Dorsolateral prefrontal cortex (tissue), 120 donors: ENCODE measurements at regions of chr2 and their contacts with region 1.

Region 1: GRCh38 chr2:61888267-61889055 is at the start of gene CCT4:
- DNase-seq: peak; percentile 79 to 91 (median 86)
- H3K4me3 ChIP-seq: peak within 1 kb of the TSS; percentile 65 to 98 (median 89)
- H3K27ac ChIP-seq: peak within 1 kb of the TSS; percentile 92 to 100 (median 99)
- H3K27me3 ChIP-seq: no peaks in the 10 kb centered on the region
- CTCF ChIP-seq: peak in 22 of 56 donors; percentile 5 to 46 (median 18)
- total RNA-seq, gene CCT4: 56.8 to 160 (median 105) TPM

Region 2: GRCh38 chr2:61144697-61145268 is 743.7 kb before region 1 on chr2:
- intact Hi-C with region 1: loop called (anchors 10 kb)
- DNase-seq: peak; percentile 79 to 93 (median 88)
- H3K4me3 ChIP-seq: peak overlapping the region; percentile 51 to 96 (median 69)
- H3K27ac ChIP-seq: peak overlapping the region in 58 of 59 donors; percentile 31 to 96 (median 87)
- H3K27me3 ChIP-seq: no peaks in the 10 kb centered on the region
- CTCF ChIP-seq: peak in 29 of 56 donors; percentile 3 to 50 (median 26)

Region 3: DNA sequence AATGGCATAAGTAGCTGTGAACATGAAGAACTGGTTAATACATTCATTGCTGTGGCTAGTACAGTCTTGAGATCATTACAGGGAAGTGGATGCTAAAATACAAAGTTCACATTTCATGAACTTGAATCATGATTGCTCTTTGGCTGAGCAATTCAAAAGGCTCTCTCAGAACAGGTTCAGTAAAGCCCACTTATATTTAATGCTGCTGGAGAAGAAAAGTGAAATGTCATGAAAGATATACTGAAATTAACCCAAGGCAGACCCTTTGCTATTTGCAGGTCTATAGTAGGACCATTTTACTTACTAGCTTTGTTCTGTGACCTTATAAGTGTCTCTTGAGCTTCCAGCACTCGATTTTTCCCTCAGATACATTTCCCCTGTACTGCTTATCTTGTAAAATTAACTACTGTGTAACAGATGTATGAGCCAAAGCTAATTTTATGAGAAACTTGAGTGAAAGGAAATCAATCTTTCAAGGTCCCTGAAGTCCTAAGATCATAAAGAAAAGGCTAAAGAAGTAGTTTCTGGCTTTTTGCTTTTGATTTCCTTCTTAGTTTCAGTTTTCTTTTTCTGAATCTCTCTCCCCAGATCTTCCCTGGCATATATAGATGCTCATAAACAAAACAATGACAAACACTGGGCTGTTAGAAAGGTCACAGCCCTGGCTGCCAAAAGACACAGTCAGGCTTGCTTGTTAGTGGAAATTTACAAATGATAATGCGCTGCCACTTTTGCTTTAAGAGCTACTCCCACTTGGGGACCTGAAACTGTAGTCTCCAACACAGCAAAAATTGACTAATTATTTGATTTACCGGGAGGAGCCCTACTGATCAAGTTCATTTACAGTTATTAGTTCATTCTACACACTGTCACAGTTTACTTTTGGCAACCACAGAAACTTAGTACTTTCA is 217.6 kb before region 1 on chr2:
- intact Hi-C with region 1: loop called in 1 of 2 experiments (anchors 10 kb)
- DNase-seq: peak in 8 of 10 donors; percentile 16 to 78 (median 52)
- H3K4me3 ChIP-seq: peak overlapping the region in 58 of 59 donors; percentile 5 to 65 (median 41)
- H3K27ac ChIP-seq: peak overlapping the region; percentile 76 to 100 (median 98)
- H3K27me3 ChIP-seq: no peaks in the 10 kb centered on the region
- CTCF ChIP-seq: peak in 5 of 56 donors; percentile 16 to 29 (median 20)

Region 4: DNA sequence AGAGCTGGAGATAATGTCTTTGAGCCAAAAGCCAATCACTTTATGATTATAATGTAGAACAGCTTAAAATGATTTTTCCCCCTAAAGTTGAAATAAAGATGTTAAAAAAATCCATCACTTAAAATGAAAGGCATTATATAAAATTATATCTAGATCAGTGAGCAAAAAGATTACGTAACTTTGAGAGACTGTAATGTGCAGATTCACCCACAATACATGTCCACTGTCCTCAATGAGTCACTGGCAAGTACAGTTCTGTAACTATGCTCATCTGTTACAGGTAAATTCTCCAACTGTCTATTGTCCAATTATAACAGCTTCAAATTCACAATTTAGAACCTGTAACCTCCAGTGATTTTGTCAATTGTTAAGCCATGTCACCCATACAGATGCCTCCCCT is 53.6 kb before region 1 on chr2:
- intact Hi-C with region 1: no loop called
- DNase-seq: no peak
- H3K4me3 ChIP-seq: no peak overlapping the region
- H3K27ac ChIP-seq: no peak overlapping the region
- H3K27me3 ChIP-seq: no peaks in the 10 kb centered on the region
- CTCF ChIP-seq: no peak

Region 5: DNA sequence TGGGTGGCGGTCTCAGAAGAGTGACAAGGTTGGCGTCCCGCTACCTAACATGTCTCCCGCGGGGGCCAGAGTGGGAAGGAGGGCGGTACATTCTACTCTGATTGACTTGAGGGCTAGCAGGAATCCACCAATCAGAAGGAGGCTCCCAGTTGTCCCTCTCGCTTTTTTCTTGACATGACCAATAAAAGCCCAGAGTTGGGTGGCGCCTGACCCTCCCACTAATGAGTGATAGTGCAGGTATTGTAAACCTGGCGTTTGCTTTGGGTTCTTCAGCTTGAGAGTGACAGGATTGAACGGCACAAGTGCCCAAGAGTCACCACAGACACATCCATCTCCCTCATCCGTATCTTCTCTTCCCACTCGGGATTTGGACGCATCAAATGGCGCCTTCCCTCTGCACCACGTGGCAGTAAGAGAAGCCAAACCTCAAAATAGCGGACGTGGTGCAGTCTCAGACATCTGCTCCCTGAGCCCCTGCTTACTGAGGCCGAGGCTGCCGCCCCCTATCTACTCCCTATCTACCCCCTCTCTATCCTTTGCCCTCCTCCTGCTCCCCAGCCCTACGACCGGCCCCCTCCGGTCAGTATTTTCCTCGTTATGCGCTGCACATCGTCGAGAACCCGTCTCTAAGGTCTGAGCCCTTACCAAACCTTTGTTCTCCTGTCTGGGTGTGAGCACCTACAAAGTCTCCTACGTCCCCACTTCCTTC is 33.8 kb before region 1 on chr2:
- intact Hi-C with region 1: loop called (anchors 2 to 5 kb)
- DNase-seq: peak; percentile 66 to 97 (median 94)
- H3K4me3 ChIP-seq: peak overlapping the region; percentile 39 to 100 (median 88)
- H3K27ac ChIP-seq: peak overlapping the region; percentile 60 to 97 (median 89)
- H3K27me3 ChIP-seq: no peaks in the 10 kb centered on the region
- CTCF ChIP-seq: peak in 9 of 56 donors; percentile 4 to 24 (median 11)

Region 6: DNA sequence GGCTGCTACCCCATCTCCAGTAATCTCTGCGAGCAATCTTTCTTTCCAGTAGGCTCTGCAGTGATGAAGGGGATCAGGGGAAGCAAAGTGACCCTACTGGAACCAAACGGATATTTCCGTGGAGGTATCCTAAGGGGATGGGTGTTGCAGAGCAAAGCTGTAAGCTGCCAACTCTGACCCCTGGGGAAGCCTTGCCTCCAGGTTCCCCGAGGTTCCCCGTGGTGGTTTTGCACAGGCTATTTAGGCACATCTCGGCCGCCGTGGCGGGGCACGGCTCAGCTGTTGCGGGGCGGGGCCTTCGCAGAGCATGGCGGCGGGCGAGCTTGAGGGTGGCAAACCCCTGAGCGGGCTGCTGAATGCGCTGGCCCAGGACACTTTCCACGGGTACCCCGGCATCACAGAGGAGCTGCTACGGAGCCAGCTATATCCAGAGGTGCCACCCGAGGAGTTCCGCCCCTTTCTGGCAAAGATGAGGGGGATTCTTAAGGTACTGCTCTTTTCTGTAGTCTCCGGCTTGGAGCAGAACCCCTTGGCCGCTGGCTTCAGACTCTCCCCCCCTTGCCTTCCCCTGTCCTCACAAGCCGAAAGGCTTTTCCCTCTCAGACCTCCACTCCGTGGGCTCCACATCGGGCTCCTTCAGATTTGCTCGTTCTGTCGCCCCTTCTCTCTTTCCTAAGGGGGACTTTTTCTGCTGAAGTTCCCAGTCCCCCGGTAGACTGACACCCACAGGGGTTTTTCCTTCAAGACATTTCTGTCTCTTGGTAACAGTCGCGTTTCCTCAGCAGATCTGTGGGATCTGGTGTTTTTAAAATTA is 17.1 kb after region 1 on chr2 and contains the start of gene COMMD1:
- intact Hi-C with region 1: loop called in 1 of 2 experiments (anchors 2 kb)
- DNase-seq: peak; percentile 80 to 93 (median 88)
- H3K4me3 ChIP-seq: peak within 1 kb of the TSS; percentile 38 to 98 (median 85)
- H3K27ac ChIP-seq: peak within 1 kb of the TSS; percentile 1 to 91 (median 79)
- H3K27me3 ChIP-seq: no peaks in the 10 kb centered on the region
- CTCF ChIP-seq: peak in 24 of 56 donors; percentile 3 to 42 (median 23)
- total RNA-seq, gene COMMD1: 29.8 to 52.8 (median 41.1) TPM